Left cardiac atrium (tissue), 4 donors: ENCODE measurements at regions of chr18 and their contacts with region 1.

Region 1: DNA sequence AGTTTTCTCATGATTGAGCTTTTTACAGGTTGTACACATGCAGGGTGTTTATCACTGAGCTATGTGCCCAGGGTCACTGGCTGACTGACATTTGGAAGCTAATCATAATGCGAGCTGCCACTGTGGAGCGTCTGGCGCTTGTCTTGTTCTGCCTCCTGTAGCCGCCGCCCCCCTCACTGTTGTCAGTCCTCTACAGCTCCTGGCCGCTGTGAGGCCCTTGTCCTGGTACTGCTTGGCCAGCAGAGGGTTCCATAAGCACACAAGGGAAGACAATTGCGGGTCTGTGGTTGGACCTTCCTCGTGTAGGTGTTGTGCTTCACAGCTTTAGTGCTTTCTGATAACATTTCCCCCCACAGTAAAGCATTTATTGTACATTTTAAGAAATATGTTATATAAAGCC is 105.6 kb upstream of the LDLRAD4 start:
- DNase-seq: peak; percentile 84
- ATAC-seq: peak; percentile 95 to 98

Region 2: GRCh38 chr18:13166023-13166422 is 53.0 kb after region 1 on chr18:
- intact Hi-C with region 1: loop called in 1 of 2 experiments (anchors 10 kb)
- DNase-seq: no peak
- ATAC-seq: no peak

Region 3: DNA sequence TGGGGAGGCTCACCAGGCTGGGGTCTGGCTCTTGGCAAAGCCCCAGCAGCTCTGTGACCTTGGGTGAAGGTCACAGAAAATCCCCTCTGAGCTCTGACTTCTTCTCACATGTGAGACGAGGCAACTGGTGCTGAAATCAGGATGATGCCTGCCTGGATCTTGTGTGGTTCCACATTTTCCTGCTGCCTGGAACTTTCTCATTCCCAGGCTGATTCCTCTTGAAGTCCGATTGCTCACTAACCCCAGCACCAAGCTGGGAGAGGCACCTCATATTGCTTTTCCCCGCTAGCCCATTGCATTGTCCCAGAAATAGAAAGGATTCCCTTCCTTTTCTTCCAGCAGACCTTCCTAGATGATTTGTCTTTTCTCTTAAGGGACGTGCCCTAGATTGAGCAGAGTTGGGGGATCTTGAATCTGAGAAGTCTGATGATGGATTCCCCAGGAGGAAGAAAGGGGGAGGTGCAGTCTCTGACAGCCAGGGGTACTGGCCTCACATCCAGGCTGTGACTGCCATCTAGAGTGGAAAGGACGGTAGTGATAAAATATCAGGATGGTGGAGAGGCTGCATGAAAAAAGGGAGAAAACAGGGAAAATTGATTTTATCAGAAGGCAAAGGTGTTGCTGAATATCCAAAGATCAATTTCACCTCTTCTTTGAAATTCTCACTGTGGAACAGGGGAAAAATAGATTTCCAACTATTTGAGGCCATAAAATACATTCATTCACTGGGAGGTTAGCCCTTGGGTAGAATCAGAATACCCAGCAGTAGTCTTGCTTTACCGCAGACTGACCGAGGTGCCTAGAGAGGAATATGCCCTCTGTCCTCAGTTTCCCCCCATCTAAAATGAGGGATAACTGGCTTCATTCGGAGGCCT is 517.1 kb after region 1 on chr18:
- intact Hi-C with region 1: loop called in 1 of 2 experiments (anchors 10 kb)
- DNase-seq: peak; percentile 65
- ATAC-seq: peak; percentile 89 to 92